ENCODE measurements at regions of chr5 and their contacts with region 1.

Region 1: GRCh38 chr5:143124593-143124992 is 278.9 kb downstream of the NR3C1 start:
- DNase-seq: no peak
- H3K4me3 ChIP-seq: no peak overlapping the region
- H3K27ac ChIP-seq: no peak overlapping the region
- H3K4me1 ChIP-seq: peaks cover 16% of the 10 kb centered on the region
- H3K27me3 ChIP-seq: peaks cover 3 to 7% of the 10 kb centered on the region in 2 experiments
- CTCF ChIP-seq: no peak
- POLR2A ChIP-seq: no peak

Region 2: GRCh38 chr5:143037071-143037470 is 87.5 kb before region 1 on chr5:
- CTCF ChIA-PET with region 1: no interaction called
- POLR2A ChIA-PET with region 1: no interaction called
- dilution Hi-C with region 1: no loop called
- intact Hi-C with region 1: loop called (anchors 1 kb)
- DNase-seq: peak; percentile 88
- H3K4me3 ChIP-seq: no peak overlapping the region
- H3K27ac ChIP-seq: peak overlapping the region; percentile 3
- H3K4me1 ChIP-seq: peaks cover 22% of the 10 kb centered on the region
- H3K27me3 ChIP-seq: no peaks in the 10 kb centered on the region
- CTCF ChIP-seq: no peak
- POLR2A ChIP-seq: no peak

Region 3: DNA sequence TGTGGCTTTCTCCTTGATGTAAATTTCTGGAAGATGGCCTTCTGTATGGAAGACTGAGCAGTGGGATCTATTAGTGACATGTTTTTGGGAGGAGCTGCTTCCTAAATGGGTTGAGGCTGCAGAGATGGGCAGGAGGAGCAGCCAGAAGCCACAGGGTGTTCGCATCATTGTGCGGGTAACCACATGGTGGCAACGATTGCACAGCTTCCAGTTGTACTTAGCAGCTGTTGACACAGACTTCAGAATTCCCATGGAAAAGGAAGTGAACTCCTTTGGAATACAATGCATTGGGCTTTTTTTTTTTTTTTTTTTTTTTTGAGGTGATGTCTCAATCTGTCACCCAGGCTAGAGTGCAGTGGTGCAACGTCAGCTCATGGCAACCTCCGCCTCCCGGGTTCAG is 18.4 kb before region 1 on chr5:
- CTCF ChIA-PET with region 1: interaction called, 12 read pairs
- POLR2A ChIA-PET with region 1: no interaction called
- dilution Hi-C with region 1: no loop called
- intact Hi-C with region 1: no loop called
- DNase-seq: peak; percentile 79
- H3K4me3 ChIP-seq: no peak overlapping the region
- H3K27ac ChIP-seq: no peak overlapping the region
- H3K4me1 ChIP-seq: no peaks in the 10 kb centered on the region
- H3K27me3 ChIP-seq: no peaks in the 10 kb centered on the region
- CTCF ChIP-seq: peak in 1 of 2 donors; percentile 35
- POLR2A ChIP-seq: no peak

Region 4: DNA sequence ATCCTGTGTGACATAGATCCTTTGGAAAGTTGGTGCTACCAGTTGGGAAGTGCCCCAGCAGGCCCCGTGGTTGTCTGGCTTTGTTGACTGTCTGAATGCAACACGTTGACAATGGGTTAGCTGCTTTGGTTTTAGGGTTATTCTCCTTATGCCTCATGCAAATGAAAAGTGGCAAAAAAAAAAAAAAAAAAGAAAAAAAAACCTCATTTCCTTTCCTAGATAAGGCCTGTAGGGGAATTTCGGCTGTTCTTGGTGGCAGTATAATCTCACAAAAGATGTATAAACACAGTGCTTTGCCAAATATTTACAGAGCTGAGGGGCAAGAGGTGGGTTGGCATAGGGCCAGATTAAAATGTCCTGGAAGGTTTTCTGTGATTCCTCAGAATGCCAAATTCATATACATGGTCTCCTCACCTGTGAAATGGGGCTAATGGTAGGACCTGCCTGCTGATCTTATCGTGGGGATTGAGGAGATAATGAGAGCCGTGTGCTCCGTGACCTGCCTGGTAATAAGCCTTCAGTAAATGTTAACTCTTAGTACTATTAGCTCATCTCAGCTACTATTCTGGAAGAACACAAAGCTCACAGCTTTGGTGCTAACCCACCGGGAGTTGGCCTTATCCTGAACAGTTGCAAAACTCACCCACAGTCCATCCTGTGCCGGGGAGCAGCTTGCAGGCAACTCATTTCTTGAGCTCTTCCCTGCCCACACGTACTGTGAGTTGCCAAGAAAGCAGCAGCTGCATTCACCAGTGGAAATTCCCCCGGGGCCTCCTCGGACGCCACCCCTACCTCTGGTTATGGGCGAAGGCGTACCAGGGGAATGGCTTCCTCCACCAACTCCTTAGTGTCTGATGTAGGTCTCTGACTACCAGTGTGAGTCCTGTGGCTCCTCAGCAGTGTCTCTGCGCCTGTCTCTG is 58.6 kb after region 1 on chr5:
- CTCF ChIA-PET with region 1: no interaction called
- POLR2A ChIA-PET with region 1: no interaction called
- dilution Hi-C with region 1: no loop called
- intact Hi-C with region 1: loop called (anchors 5 kb)
- DNase-seq: peak; percentile 70
- H3K4me3 ChIP-seq: no peak overlapping the region
- H3K27ac ChIP-seq: no peak overlapping the region
- H3K4me1 ChIP-seq: peaks cover 7% of the 10 kb centered on the region
- H3K27me3 ChIP-seq: no peaks in the 10 kb centered on the region
- CTCF ChIP-seq: no peak
- POLR2A ChIP-seq: no peak

Region 5: GRCh38 chr5:143314659-143315058 is 190.1 kb after region 1 on chr5:
- CTCF ChIA-PET with region 1: no interaction called
- POLR2A ChIA-PET with region 1: no interaction called
- dilution Hi-C with region 1: no loop called
- intact Hi-C with region 1: loop called (anchors 5 kb)
- DNase-seq: peak; percentile 69
- H3K4me3 ChIP-seq: no peak overlapping the region
- H3K27ac ChIP-seq: peak overlapping the region; percentile 24
- H3K4me1 ChIP-seq: peaks cover 62% of the 10 kb centered on the region
- H3K27me3 ChIP-seq: no peaks in the 10 kb centered on the region
- CTCF ChIP-seq: no peak
- POLR2A ChIP-seq: no peak

Region 6: GRCh38 chr5:143592648-143593047 is 468.1 kb after region 1 on chr5:
- CTCF ChIA-PET with region 1: no interaction called
- POLR2A ChIA-PET with region 1: no interaction called
- dilution Hi-C with region 1: no loop called
- intact Hi-C with region 1: no loop called
- DNase-seq: peak; percentile 42
- H3K4me3 ChIP-seq: no peak overlapping the region
- H3K27ac ChIP-seq: no peak overlapping the region
- H3K4me1 ChIP-seq: peaks cover 16% of the 10 kb centered on the region
- H3K27me3 ChIP-seq: no peaks in the 10 kb centered on the region
- CTCF ChIP-seq: no peak
- POLR2A ChIP-seq: no peak

Measured in endothelial cell of umbilical vein (primary cell).